ENCODE measurements at regions of chr6 and their contacts with region 1.

Region 1: DNA sequence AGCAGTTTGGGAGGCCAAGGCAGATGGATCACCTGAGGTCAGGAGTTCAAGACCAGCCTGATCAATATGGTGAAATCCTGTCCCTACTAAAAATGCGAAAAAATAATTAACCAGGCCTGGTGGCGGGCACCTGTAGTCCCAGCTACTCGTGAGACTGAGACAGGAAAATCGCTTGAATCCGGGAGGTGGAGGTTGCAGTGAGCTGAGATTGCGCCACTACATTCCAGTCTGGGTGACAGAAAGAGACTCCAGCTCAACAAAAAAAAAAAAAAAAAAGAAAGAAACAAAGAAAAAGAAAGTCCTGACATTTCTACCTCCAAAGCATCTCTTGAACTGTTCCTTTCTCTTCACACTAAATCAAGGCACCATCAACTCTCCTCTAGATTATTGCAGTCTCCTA is 9.6 kb downstream of the THEMIS start:
- DNase-seq: no peak
- ATAC-seq: no peak
- H3K4me3 ChIP-seq: no peak overlapping the region
- H3K27ac ChIP-seq: no peak overlapping the region
- H3K4me1 ChIP-seq: no peaks in the 10 kb centered on the region
- H3K27me3 ChIP-seq: no peaks in the 10 kb centered on the region
- CTCF ChIP-seq: no peak

Region 2: DNA sequence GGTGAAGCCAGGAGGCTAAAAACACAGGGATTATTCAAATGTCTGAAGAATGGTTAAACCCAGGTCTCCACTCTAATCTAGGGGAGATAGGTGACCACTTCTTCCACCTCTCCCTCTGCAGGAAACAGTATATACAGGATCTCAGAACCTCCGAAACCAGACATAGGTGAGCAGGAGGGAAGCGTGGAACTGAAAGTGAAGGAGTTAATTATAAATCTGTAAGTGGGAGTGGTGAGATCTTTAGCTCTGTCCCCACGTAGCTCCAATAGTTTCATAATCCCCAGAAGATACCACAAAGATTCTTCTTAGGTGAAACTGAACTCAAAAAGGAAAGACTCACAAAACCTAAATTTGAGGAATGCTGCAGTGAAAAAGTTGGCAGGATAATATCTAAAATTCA is 67.2 kb before region 1 on chr6:
- CTCF ChIA-PET with region 1: no interaction called
- POLR2A ChIA-PET with region 1: interaction called, 17 read pairs
- intact Hi-C with region 1: no loop called
- DNase-seq: no peak
- ATAC-seq: no peak
- H3K4me3 ChIP-seq: no peak overlapping the region
- H3K27ac ChIP-seq: no peak overlapping the region
- H3K4me1 ChIP-seq: no peaks in the 10 kb centered on the region
- H3K27me3 ChIP-seq: peaks cover 15% of the 10 kb centered on the region
- CTCF ChIP-seq: no peak

Region 3: GRCh38 chr6:128389820-128390534 is 498.7 kb after region 1 on chr6:
- CTCF ChIA-PET with region 1: no interaction called
- POLR2A ChIA-PET with region 1: no interaction called
- intact Hi-C with region 1: no loop called
- DNase-seq: no peak
- ATAC-seq: no peak
- H3K4me3 ChIP-seq: no peak overlapping the region
- H3K27ac ChIP-seq: no peak overlapping the region
- H3K4me1 ChIP-seq: no peaks in the 10 kb centered on the region
- H3K27me3 ChIP-seq: no peaks in the 10 kb centered on the region
- CTCF ChIP-seq: no peak

Region 4: DNA sequence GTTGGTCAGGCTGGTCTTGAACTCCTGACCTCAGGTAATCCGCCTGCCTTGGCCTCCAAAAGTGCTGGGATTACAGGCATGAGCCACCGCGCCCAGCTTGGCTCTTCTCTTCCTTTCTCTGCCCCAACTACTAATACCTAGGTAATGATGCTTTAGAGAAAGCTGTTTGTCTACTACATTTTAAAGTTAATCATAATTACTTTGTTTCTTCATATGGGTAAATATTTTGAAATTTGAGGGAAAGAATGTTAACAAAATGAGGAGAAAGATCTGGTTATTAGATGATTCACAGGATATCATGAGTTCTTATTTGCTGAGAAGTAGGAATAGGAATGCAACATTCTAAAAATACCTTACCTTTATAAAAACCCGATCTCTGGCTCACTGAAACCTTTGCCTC is 647.5 kb after region 1 on chr6:
- CTCF ChIA-PET with region 1: no interaction called
- POLR2A ChIA-PET with region 1: no interaction called
- intact Hi-C with region 1: no loop called
- DNase-seq: peak; percentile 66
- ATAC-seq: peak; percentile 70
- H3K4me3 ChIP-seq: no peak overlapping the region
- H3K27ac ChIP-seq: no peak overlapping the region
- H3K4me1 ChIP-seq: no peaks in the 10 kb centered on the region
- H3K27me3 ChIP-seq: no peaks in the 10 kb centered on the region
- CTCF ChIP-seq: no peak

Measured in PC-3 (cell line).